ENCODE measurements at regions of chr1 and their contacts with region 1.

Region 1: GRCh38 chr1:203340112-203340804 is 10.7 kb downstream of the FMOD start:
- DNase-seq: peak; percentile 78
- H3K4me3 Mint-ChIP-seq: no peak overlapping the region
- H3K27ac Mint-ChIP-seq: no peak overlapping the region
- H3K4me1 Mint-ChIP-seq: peaks cover 21% of the 10 kb centered on the region
- H3K27me3 Mint-ChIP-seq: peaks cover 4% of the 10 kb centered on the region

Region 2: GRCh38 chr1:203273206-203273868 is 66.9 kb before region 1 on chr1:
- CTCF ChIA-PET with region 1: interaction called, 686 read pairs
- intact Hi-C with region 1: loop called (anchors 1 kb)
- DNase-seq: peak; percentile 96
- H3K4me3 Mint-ChIP-seq: peak overlapping the region; percentile 72
- H3K27ac Mint-ChIP-seq: peak overlapping the region; percentile 83
- H3K4me1 Mint-ChIP-seq: peaks cover 58% of the 10 kb centered on the region
- H3K27me3 Mint-ChIP-seq: no peaks in the 10 kb centered on the region

Region 3: DNA sequence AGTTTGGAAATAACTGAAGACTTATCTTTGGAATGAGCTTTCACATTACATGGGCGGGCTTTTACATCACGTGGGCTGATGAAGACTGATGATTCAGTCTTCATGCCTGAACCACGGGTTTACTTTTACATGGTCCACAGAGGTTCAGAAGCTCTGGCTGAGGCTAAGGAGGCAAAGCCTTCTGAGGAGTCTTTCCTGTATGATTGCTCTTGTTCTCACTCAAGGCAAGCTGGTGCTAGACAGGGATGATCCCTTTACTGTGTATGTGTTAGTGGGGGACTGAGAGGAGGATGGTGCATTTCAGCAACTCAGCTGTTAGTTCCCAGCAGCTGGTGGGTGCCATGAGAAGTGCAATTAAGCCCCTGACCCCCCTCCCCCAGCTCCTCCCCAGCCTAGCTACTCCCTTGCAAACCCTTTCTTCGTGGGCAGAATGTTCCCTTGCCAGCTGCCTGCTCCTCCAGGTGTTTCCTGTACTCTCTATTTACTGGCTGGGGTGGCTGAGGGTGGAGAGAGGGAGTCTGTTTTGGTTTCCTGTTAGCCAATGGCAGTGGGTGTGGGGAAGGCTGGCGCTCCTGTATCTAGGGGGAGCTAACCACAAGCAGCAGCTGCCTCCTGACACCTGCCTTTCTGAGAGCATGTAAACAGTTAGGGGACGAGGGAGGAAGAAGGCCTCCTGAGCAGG is 19.5 kb before region 1 on chr1:
- CTCF ChIA-PET with region 1: interaction called, 88 read pairs
- intact Hi-C with region 1: no loop called
- DNase-seq: peak; percentile 84
- H3K4me3 Mint-ChIP-seq: peak overlapping the region; percentile 40
- H3K27ac Mint-ChIP-seq: peak overlapping the region; percentile 88
- H3K4me1 Mint-ChIP-seq: peaks cover 76% of the 10 kb centered on the region
- H3K27me3 Mint-ChIP-seq: no peaks in the 10 kb centered on the region

Region 4: DNA sequence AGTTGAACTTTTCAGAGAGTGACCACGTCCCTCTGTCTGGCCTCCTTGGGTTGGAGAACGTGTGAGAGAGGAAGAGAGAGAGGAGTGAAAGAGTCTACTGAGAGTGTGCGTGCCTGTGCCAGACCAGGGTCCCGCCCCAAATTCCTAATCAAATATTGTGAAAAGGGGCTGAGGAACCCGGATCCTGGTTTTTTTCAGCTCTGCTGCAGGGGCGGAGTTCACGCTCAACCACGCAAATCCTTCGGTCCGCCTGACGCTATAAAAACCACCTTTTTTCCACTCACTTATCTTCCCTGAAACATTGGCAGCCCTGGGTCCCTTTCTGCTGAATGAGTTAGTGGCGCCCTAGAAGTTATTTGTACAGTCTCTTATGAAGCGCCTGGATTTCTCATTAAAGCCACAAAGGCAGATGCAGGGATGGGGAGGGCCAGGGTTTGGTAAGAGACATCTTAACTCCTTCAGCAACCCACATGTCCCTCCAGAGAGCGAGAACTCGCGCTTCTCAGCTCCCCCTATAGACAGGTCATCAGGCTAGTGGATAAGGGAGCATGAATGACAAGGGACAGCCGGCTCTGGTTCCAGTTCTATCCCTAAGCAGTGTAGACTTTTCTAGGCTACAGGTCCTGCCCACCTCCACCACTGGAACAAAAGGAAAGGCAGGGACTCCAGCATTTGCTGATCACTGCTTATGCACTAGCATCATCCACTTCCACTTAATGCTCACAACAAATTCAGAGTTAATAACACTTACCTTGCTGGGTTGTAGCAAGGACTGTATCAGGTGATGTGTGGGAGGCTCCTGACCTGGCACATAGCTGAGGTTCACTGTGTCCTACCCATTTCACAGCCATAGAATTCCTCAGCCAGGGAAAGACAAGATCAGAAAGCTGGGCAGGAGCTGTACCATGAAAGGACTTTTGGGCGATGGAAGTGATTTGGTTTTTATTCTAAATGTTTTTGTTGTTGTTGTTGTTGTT is 11.1 kb after region 1 on chr1 and contains the start of gene FMOD:
- CTCF ChIA-PET with region 1: interaction called, 11 read pairs
- intact Hi-C with region 1: no loop called
- DNase-seq: peak; percentile 38
- H3K4me3 Mint-ChIP-seq: peak within 1 kb of the TSS; percentile 52
- H3K27ac Mint-ChIP-seq: peak within 1 kb of the TSS; percentile 52
- H3K4me1 Mint-ChIP-seq: peaks cover 11% of the 10 kb centered on the region
- H3K27me3 Mint-ChIP-seq: peaks cover 11% of the 10 kb centered on the region
- total RNA-seq, gene FMOD: 5.3 to 5.8 TPM

Region 5: DNA sequence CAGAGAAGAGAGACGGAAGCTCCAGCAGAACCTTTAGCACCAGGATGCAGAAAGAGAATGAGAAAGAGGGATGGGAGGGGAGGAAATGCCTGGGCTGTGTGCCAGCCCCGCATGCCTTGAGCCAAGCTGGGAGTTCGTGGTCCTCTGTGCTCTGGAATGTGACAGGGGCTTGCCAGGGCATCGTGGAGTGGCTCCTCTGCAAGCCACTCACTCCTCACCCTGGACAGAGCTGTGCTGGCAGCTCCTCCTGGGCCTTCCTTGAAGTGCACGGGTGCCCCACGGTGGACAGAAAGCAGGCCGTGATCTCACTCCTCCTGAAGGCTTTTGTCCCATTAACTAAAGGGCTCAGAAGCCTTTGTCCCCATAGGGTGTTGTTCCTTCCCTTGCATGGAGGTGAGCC is 100.5 kb after region 1 on chr1:
- CTCF ChIA-PET with region 1: interaction called, 12 read pairs
- intact Hi-C with region 1: loop called (anchors 5 kb)
- DNase-seq: peak; percentile 14
- H3K4me3 Mint-ChIP-seq: no peak overlapping the region
- H3K27ac Mint-ChIP-seq: no peak overlapping the region
- H3K4me1 Mint-ChIP-seq: no peaks in the 10 kb centered on the region
- H3K27me3 Mint-ChIP-seq: peaks cover 3% of the 10 kb centered on the region

Region 6: DNA sequence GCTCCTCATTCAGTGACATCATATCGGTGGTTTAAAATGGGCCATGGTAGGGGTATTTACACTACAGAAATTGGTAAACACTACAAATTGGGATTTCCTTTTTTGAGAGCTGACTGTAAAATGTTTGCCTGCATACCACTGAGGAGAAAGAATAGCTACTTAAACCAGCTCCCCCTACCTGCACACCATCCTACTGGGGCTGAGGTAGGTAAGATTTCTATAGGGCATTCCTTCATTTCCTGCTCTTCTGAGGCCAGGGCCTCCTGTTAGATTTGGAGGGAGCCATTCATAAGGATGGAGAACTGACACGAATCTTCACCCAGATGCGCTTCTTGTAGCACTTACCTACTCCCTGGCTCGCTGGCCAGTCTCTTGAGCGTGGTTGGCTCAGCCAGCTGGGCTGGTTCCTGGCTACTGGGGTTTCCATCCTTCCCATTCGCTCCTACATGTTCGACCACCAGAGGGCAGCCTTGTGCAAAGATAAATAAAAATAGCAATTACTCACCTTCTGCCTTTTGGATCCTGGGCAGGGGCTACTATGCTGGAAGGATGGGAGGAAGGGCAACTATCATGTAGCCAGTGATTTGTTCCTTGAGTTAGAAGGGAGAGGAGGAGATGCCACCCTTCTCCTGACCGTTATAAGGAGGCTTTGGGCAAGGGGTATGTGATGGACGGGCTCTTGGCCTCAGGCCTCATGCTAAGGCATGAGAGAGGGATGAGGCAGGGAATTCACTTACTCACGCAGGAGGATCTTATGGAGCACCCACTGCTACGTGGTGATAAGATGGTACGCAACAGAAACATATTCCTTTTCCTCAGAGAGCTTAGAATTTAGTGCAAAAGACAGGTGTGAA is 164.4 kb after region 1 on chr1:
- CTCF ChIA-PET with region 1: interaction called, 11 read pairs
- intact Hi-C with region 1: no loop called
- DNase-seq: peak; percentile 91
- H3K4me3 Mint-ChIP-seq: no peak overlapping the region
- H3K27ac Mint-ChIP-seq: no peak overlapping the region
- H3K4me1 Mint-ChIP-seq: peaks cover 6% of the 10 kb centered on the region
- H3K27me3 Mint-ChIP-seq: no peaks in the 10 kb centered on the region